Aorta (tissue), 5 donors: ENCODE measurements at regions of chr4 and their contacts with region 1.

Region 1: GRCh38 chr4:81471588-81472288 is at the start of gene RASGEF1B:
- DNase-seq: peak; percentile 95 to 96
- ATAC-seq: peak; percentile 97
- H3K4me3 ChIP-seq: peak within 1 kb of the TSS; percentile 74 to 81
- H3K27ac ChIP-seq: peak within 1 kb of the TSS in 1 of 2 donors; percentile 42
- H3K4me1 ChIP-seq: no peaks in the 10 kb centered on the region
- H3K27me3 ChIP-seq: no peaks in the 10 kb centered on the region
- total RNA-seq, gene RASGEF1B: 12.6 to 19.2 TPM

Region 2: DNA sequence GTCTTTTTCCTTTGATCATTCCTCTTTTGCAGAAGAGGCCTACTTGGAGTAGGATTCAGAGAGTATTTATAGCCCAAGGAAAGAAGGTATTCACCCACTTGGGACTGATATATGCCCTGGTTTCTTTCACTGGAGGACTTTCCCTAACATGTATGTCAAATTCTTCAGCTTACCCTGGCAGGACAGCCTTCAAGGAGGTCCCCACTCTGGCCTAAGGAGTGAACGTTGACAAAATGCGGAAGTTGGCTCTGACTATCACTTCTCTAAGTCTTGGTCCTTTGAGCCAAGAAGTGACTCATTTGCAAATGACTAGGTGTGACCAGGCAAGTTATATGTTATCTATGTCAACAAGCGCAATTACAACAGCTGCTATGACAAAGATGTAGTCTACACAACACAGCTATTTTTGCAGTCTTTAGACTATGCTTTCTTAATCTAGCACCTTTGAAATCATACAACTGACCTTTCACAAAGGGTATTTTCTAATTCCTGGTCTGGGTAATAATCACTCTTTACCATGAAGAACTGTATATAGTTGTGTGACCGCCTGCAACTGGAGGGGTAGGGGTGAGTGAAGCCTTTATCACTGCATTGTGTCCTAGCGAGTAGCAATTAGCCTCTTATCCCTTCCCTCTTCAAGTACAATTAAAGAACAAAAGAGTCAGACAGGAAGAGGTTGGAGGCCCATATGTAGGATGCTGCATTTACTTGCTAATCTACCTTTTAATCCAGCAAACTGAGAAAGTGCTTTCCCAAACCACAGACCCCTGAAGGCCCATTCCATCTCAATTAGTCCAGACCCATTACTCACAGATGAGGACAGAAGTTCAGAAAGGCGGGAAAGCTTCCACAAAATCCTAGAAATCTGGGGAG is 50.2 kb before region 1 on chr4:
- intact Hi-C with region 1: no loop called
- DNase-seq: no peak
- ATAC-seq: no peak
- H3K4me3 ChIP-seq: no peak overlapping the region
- H3K27ac ChIP-seq: no peak overlapping the region
- H3K4me1 ChIP-seq: no peaks in the 10 kb centered on the region
- H3K27me3 ChIP-seq: no peaks in the 10 kb centered on the region

Region 3: GRCh38 chr4:81844717-81845116 is 373.0 kb after region 1 on chr4:
- intact Hi-C with region 1: loop called in 1 of 2 experiments (anchors 2 kb)
- DNase-seq: peak in 1 of 2 donors; percentile 79
- ATAC-seq: peak; percentile 91
- H3K4me3 ChIP-seq: no peak overlapping the region
- H3K27ac ChIP-seq: no peak overlapping the region
- H3K4me1 ChIP-seq: no peaks in the 10 kb centered on the region
- H3K27me3 ChIP-seq: no peaks in the 10 kb centered on the region

Region 4: DNA sequence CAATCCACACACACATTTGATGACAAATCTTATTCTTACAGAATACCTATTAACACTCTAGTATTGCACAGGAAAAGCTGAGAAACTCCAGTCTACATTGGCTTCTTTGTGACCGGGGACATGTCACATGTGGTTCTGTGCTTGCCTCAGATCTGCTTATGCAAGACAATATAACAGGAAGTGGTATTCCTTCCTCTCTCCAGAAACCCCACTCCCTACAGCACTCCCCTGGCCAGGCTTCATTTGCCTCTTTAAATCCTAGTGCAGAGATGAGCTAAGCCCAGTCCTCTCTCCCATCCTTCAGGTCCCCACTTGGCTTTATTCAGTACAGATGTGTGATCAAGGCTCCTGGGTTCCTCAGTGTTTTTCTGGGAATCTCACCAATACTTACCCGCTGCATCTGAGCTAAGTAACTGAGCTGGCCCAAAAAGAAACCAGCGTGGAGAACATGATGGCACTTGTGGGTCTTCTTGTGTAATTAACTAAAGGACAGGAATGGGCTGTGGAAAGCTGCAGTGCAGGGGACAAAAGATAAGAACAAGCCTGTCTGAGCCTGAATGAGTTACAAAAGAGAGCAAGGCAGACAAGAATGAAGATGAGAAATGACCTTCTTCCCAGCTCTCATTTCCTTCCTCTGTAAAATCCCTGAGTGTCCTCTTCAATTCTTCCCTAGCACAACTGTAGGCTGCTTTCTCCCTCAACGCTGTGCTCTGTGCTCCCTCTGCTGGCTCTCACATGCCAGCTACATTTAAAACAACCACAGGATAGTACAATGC is 796.5 kb after region 1 on chr4:
- intact Hi-C with region 1: loop called (anchors 5 kb)
- DNase-seq: peak in 1 of 2 donors; percentile 68
- ATAC-seq: peak; percentile 89
- H3K4me3 ChIP-seq: no peak overlapping the region
- H3K27ac ChIP-seq: no peak overlapping the region
- H3K4me1 ChIP-seq: no peaks in the 10 kb centered on the region
- H3K27me3 ChIP-seq: no peaks in the 10 kb centered on the region

Region 5: DNA sequence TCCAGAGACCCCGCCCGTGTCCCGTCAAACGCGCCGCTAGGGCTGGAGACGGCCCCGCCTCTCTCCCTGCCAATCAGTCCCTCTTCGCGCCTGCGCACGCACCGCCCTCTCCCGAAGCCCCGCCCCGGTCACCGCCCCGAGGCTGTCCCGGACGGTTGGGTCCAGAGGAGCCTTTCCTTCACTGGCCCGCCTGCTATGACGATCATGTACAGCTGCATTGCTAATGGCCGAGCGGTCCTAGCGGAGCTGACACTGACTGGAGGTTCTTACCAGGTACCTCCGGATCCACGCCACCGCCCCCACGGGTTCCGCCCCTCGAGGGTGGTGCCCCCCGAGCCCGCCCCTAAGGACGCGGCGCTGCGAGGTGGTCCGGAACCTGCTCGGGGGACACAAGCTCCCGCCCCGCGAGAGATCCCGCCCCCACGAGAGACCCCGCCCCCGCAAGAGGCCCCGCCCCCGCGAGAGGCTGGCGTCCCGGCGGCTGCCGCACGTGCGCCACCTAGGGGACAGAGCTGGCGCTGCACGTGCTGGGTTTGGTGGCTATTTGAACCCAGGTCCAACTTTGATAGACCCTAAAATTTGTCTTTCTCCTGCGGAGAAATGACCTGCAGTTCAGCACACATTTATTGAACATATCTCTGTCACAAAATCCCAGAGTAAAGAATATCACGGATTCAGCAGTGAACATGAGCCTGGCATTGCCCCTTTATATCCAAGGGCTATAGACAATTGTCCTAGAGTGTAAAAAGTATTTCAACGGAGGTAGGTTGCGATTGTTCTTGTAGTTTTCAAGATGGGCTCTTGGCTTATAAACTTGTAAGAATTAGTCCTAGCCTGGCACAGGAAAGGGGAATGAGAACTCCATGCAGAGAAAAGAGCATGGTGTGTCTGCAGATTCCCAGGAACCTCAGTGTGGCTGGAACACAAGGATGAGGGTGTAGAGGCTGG is 813.4 kb after region 1 on chr4:
- intact Hi-C with region 1: loop called in 1 of 2 experiments (anchors 5 kb)
- DNase-seq: peak; percentile 100
- ATAC-seq: peak; percentile 100
- H3K4me3 ChIP-seq: peak overlapping the region in 1 of 2 donors; percentile 38
- H3K27ac ChIP-seq: no peak overlapping the region
- H3K4me1 ChIP-seq: no peaks in the 10 kb centered on the region
- H3K27me3 ChIP-seq: no peaks in the 10 kb centered on the region